Endothelial cell of umbilical vein (primary cell): ENCODE measurements at regions of chr6 and their contacts with region 1.

Region 1: GRCh38 chr6:41787219-41787917 is at the start of gene TOMM6:
- DNase-seq: peak; percentile 97
- H3K4me3 ChIP-seq: peak within 1 kb of the TSS; percentile 78 to 97 (median 94)
- H3K27ac ChIP-seq: peak within 1 kb of the TSS; percentile 80
- H3K4me1 ChIP-seq: peaks cover 10% of the 10 kb centered on the region
- H3K27me3 ChIP-seq: no peaks in the 10 kb centered on the region
- CTCF ChIP-seq: peak; percentile 83 to 84
- POLR2A ChIP-seq: peak; percentile 95
- total RNA-seq, gene TOMM6: 220 and 233 TPM in 2 replicates

Region 2: GRCh38 chr6:41735427-41736356 is 51.7 kb before region 1 on chr6 and contains the start of gene TFEB:
- CTCF ChIA-PET with region 1: interaction called, 16 read pairs
- POLR2A ChIA-PET with region 1: no interaction called
- dilution Hi-C with region 1: no loop called
- intact Hi-C with region 1: loop called (anchors 2 kb)
- DNase-seq: peak; percentile 87
- H3K4me3 ChIP-seq: peak within 1 kb of the TSS; percentile 9 to 70 (median 24)
- H3K27ac ChIP-seq: no peak within 1 kb of the TSS
- H3K4me1 ChIP-seq: peaks cover 15% of the 10 kb centered on the region
- H3K27me3 ChIP-seq: no peaks in the 10 kb centered on the region
- CTCF ChIP-seq: peak; percentile 95 to 99
- POLR2A ChIP-seq: no peak
- total RNA-seq, gene TFEB: 4.9 and 5.5 TPM in 2 replicates

Region 3: DNA sequence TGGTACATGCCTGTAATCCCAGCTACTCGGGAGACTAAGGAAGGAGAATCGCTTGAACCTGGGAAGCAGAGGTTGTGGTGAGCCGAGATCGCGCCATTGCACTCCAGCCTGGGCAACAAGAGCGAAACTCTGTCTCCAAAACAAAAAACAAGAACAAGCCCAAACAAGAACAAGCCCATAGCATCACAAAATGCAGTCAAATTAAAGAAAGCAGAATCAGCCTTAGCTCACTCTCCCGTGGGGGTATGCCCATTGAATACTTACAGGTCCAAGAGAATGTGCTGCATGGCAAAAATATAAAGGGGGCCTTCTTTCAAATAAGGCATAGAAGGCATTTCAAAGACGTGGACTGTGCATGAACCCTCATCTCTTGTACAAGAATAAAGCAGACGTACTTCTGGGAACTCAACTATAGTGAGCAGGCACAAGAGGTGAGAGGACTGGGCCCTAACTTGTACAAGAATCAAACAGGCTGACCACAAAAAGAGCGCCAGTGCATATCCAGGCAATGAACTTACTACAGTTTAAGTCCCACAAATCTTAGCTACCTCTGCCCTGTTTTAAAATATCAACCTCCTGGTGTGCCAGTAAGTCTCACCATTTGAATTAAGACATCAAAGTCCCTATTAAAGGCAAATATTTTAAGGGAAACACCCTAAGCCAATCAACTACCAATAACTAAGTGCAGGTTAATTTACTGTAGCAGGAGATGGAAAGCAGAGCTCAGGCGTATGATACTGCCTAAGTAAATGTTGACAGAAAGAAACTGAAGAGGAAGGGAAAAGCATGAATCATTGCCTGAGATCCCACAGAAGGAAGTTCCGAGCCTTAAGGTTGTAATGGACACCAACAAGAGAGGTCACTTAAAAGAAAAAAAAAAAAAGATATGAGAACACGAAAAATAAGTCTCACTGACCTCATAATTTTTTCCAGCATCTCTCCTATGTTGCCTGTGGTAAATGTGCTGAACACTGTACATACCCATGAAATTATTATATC is 37.5 kb after region 1 on chr6:
- CTCF ChIA-PET with region 1: interaction called, 6 read pairs
- POLR2A ChIA-PET with region 1: no interaction called
- dilution Hi-C with region 1: no loop called
- intact Hi-C with region 1: loop called (anchors 1 kb)
- DNase-seq: peak; percentile 95
- H3K4me3 ChIP-seq: peak overlapping the region in 1 of 3 experiments; percentile 8
- H3K27ac ChIP-seq: peak overlapping the region; percentile 6
- H3K4me1 ChIP-seq: peaks cover 14% of the 10 kb centered on the region
- H3K27me3 ChIP-seq: no peaks in the 10 kb centered on the region
- CTCF ChIP-seq: no peak
- POLR2A ChIP-seq: peak; percentile 25

Region 4: DNA sequence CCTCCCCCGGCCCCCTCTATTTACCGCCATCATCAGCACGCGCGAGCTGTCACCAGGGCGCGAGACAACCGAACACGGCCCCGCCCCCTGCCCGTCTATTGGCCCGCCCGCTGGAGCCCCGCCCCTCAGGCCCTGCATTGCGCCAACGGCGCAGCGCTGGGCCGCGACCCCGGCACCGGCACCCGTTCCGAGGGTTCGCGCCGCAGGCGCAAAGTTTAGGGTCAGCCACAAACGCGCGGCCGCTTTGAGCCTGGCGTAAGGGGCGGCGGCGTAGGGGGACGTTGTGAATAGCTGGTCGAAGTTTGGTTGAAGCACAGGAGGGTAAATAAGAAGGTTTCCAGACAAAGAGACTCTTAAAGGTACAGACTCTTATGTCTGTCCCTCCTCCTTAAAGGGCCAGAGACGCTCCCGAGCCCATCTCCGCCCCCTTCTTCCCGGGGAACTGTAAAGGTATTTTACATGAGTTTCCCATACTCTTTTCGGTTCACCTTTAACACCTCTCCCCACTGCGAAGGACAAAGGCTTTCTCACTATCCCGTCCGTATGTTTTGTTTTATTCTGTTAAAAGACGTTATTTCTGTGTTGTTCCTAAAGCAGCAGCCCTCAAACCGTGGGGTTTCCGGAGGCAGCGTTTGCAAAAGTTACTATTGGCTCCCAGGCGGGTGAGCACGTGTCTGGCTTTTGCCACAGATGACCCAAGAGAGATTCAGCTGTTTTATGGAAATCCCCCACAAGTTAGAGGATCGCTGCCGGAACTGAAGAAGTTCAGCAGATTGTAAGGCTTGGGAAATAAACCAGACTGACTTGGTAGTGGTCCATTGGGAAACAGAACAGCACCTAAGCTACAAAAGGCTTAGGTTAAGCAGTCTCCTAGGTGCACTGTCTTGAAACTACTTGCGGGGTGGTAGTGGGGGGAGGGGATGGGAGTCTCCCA is 108.2 kb after region 1 on chr6 and contains the start of gene USP49:
- CTCF ChIA-PET with region 1: interaction called, 5 read pairs
- POLR2A ChIA-PET with region 1: interaction called, 3 read pairs
- dilution Hi-C with region 1: no loop called
- intact Hi-C with region 1: loop called (anchors 1 kb)
- DNase-seq: peak; percentile 89
- H3K4me3 ChIP-seq: peak within 1 kb of the TSS; percentile 70 to 78 (median 72)
- H3K27ac ChIP-seq: peak within 1 kb of the TSS; percentile 84
- H3K4me1 ChIP-seq: peaks cover 12% of the 10 kb centered on the region
- H3K27me3 ChIP-seq: peaks cover 0 to 2% of the 10 kb centered on the region in 2 experiments
- CTCF ChIP-seq: no peak
- POLR2A ChIP-seq: peak; percentile 70
- total RNA-seq, gene USP49: 4.1 and 4.5 TPM in 2 replicates

Region 5: DNA sequence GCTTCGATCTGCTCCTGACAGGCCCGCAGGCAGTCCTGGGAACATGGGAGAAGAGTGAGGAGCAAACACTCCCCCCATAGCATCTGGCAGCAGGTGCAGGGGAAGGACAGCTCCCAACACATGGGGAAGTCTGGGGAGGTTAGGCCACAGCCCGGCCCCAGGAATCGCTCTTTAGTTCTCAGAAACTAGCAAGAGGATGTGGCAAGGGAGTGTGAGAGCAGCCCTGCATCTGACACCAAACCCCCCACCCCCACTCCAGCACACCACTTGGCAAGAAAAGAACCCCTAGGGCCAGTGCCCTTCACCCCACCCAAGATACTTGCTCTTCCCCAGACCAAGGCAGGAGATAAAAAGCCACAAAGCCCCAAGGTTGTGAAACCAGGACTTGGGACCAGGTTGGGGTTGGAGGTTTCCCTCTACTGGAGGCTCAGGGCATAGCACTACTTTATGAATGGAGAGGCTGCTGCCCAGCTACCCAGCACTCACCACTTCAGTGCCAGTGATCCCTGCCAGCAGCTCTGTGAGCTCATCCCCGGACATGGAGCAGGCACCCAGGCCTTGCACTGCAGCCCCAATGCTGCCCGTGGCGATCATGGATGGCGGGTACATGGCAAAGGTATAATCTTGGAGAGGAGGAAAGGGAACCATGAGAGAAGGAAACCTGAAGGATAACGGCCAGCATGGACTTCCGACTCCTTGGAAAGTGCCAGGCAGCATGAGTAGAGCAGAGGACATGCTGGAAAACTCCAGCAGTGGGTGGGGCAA is 148.9 kb after region 1 on chr6:
- CTCF ChIA-PET with region 1: interaction called, 6 read pairs
- POLR2A ChIA-PET with region 1: interaction called, 4 read pairs
- dilution Hi-C with region 1: no loop called
- intact Hi-C with region 1: loop called (anchors 1 kb)
- DNase-seq: peak; percentile 82
- H3K4me3 ChIP-seq: no peak overlapping the region
- H3K27ac ChIP-seq: no peak overlapping the region
- H3K4me1 ChIP-seq: peaks cover 27% of the 10 kb centered on the region
- H3K27me3 ChIP-seq: no peaks in the 10 kb centered on the region
- CTCF ChIP-seq: peak; percentile 84 to 86
- POLR2A ChIP-seq: no peak

Region 6: DNA sequence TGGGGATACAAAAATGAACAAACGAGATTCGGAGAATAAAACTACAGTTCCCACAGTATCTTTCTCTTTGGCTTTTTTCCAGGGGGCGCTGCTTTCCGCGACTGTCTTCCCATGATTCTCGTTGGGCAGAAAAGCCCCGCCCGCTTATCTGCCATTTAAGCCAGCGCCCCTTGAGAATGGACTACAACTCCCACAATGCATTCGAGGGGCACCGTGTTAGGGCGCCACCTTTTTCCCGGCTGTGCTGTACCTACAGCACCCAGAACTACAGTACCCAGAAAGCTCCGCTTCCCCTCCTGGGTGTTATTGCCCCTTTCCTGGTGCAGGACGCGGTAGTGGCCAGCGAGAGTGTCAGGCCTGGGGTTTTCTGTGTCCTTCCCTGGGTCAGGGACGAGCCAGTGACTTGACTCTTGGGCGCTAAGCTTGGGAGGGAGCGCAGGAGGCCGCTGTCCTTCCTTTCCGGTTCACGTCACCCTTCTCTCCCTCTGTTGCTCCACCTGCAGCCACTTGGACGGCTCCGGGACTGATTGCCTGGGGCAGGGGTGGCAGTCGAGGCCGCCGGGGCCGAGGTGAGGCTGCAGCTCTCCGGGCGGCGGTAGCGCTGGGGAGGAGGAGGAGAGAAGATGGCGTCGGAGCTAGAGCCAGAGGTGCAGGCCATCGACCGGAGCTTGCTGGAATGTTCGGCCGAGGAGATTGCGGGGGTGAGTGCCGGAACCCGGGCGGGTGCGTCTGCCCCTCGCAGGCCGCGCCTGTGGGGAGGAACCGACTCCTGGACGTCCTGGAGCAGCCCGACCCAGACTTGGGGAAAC is 776.5 kb after region 1 on chr6 and contains the start of gene UBR2:
- CTCF ChIA-PET with region 1: no interaction called
- POLR2A ChIA-PET with region 1: no interaction called
- dilution Hi-C with region 1: no loop called
- intact Hi-C with region 1: loop called (anchors 2 kb)
- DNase-seq: peak; percentile 98
- H3K4me3 ChIP-seq: peak within 1 kb of the TSS; percentile 93 to 97 (median 94)
- H3K27ac ChIP-seq: peak within 1 kb of the TSS; percentile 59
- H3K4me1 ChIP-seq: peaks cover 11% of the 10 kb centered on the region
- H3K27me3 ChIP-seq: peaks cover 0 to 3% of the 10 kb centered on the region in 2 experiments
- CTCF ChIP-seq: peak in 1 of 2 donors; percentile 27
- POLR2A ChIP-seq: peak; percentile 56
- total RNA-seq, gene UBR2: 18.6 and 22.3 TPM in 2 replicates